ENCODE measurements at regions of chr11 and their contacts with region 1.

Region 1: DNA sequence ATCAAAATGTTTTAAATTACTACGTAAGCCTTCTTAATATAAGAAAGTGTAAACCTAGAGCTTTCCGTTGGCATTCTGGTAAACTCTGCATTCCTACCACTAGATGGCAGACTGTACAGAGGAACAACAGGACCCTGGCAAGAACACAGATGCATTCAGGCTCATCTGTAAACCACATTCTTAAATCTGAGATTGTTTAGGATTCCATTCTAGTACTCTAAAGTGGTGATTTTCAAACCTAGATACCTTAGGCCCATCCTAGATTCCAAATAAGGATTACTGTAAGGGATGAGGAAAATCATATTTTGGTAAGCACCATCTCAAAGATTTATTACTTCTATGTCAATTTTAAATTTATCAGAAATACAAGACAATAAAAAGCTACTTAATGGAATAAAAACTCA is 26.9 kb downstream of the PICALM start:
- DNase-seq: peak; percentile 60
- H3K4me3 Mint-ChIP-seq: no peak overlapping the region
- H3K27ac Mint-ChIP-seq: no peak overlapping the region
- H3K4me1 Mint-ChIP-seq: peaks cover 52% of the 10 kb centered on the region
- H3K27me3 Mint-ChIP-seq: no peaks in the 10 kb centered on the region

Region 2: GRCh38 chr11:85889676-85890579 is 152.0 kb before region 1 on chr11:
- CTCF ChIA-PET with region 1: no interaction called
- DNase-seq: no peak
- H3K4me3 Mint-ChIP-seq: no peak overlapping the region
- H3K27ac Mint-ChIP-seq: no peak overlapping the region
- H3K4me1 Mint-ChIP-seq: no peaks in the 10 kb centered on the region
- H3K27me3 Mint-ChIP-seq: peaks cover 3% of the 10 kb centered on the region

Region 3: GRCh38 chr11:85988780-85989179 is 53.2 kb before region 1 on chr11:
- CTCF ChIA-PET with region 1: no interaction called
- DNase-seq: no peak
- H3K4me3 Mint-ChIP-seq: no peak overlapping the region
- H3K27ac Mint-ChIP-seq: no peak overlapping the region
- H3K4me1 Mint-ChIP-seq: no peaks in the 10 kb centered on the region
- H3K27me3 Mint-ChIP-seq: no peaks in the 10 kb centered on the region

Region 4: GRCh38 chr11:86068951-86069407 is 27.0 kb after region 1 on chr11 and contains the start of gene PICALM:
- CTCF ChIA-PET with region 1: interaction called, 33 read pairs
- DNase-seq: peak; percentile 98
- H3K4me3 Mint-ChIP-seq: peak within 1 kb of the TSS; percentile 99
- H3K27ac Mint-ChIP-seq: peak within 1 kb of the TSS; percentile 94
- H3K4me1 Mint-ChIP-seq: peaks cover 33% of the 10 kb centered on the region
- H3K27me3 Mint-ChIP-seq: no peaks in the 10 kb centered on the region

Region 5: DNA sequence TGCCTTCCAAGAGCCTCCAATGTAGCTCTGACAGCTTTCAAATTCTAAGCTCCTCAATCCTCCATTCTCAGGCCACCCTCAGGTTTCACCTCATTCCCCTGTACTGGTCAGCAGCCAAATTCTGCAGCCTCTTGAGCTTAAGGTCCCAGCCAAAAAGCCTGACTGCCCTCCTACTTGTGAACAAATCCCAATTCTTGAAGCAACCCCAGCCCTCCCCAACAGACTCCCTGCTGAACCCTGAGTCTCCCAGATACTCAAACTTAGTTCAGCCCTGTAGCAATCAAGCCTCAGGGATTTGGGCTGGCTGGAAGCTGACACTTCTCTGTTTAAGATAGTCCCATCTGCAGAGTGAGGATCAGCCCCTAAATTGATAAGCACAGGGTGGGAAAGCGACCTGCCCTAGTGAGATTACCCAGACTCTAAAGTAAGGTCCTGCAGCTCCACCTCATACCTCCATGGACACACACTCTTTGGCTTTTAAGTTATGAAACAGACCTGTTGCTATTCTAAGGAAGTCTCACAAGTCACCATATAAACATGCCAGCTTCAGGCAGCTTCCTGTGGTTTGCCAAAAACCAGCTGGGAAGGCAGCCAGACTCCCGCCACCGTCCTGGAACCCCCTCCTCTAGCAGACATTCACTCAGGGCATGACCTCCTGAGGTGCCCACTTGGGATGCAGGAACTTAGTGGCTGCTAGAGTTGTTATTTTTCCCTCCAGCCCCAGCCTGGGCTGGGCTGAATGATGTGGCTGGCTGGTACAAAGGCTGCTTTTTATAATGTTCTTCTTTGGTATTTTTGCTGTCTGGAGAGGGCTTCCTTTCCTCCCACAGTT is 109.4 kb after region 1 on chr11:
- CTCF ChIA-PET with region 1: no interaction called
- DNase-seq: no peak
- H3K4me3 Mint-ChIP-seq: no peak overlapping the region
- H3K27ac Mint-ChIP-seq: peak overlapping the region; percentile 12
- H3K4me1 Mint-ChIP-seq: peaks cover 31% of the 10 kb centered on the region
- H3K27me3 Mint-ChIP-seq: peaks cover 18% of the 10 kb centered on the region

Region 6: GRCh38 chr11:87037450-87038234 is 995.7 kb after region 1 on chr11 and contains the start of gene TMEM135:
- CTCF ChIA-PET with region 1: no interaction called
- DNase-seq: peak; percentile 96
- H3K4me3 Mint-ChIP-seq: peak within 1 kb of the TSS; percentile 98
- H3K27ac Mint-ChIP-seq: peak within 1 kb of the TSS; percentile 93
- H3K4me1 Mint-ChIP-seq: peaks cover 56% of the 10 kb centered on the region
- H3K27me3 Mint-ChIP-seq: peaks cover 15% of the 10 kb centered on the region